ENCODE measurements at regions of chr3 and their contacts with region 1.

Region 1: GRCh38 chr3:129650256-129650872 is 43.9 kb upstream of the PLXND1 start:
- DNase-seq: peak; percentile 80
- H3K4me3 ChIP-seq: no peak overlapping the region
- H3K27ac ChIP-seq: no peak overlapping the region
- H3K4me1 ChIP-seq: peaks cover 24% of the 10 kb centered on the region
- H3K27me3 ChIP-seq: no peaks in the 10 kb centered on the region
- CTCF ChIP-seq: peak; percentile 58
- POLR2A ChIP-seq: no peak

Region 2: DNA sequence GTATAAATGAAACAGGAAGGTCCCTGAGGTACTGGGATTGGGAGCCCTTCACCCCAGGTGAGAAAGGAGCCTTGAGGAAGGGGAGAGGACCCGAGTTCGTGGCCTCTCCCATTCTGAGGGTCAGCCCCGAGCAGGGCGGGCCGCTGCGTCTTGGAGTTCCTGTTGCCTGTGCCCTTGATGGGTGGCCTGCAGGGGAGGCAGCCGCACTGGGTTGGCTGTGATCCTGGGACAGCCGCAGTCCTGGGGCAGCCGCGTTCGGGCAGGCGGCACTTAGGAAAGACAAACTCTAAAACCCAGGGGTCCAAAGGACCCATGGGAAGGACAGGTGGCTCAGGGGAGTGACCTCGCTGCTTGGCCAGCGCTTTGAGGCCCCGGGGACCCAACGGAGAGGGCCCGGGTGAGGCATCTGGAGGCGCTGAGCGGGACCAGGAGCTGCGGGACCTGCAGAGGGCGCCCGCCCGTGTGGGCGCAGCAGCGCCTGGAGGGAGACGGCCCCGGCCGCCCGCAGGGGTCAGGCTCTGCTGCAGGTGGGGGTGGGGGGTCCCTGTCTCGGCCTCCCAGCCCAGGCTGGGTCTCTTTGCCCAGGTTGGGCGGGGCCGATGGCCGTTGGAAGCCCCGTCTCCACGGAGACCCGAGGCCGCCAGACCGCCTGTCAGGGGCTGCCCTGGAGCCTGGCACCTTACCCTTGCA is 306.6 kb before region 1 on chr3:
- CTCF ChIA-PET with region 1: no interaction called
- POLR2A ChIA-PET with region 1: no interaction called
- dilution Hi-C with region 1: no loop called
- intact Hi-C with region 1: no loop called
- DNase-seq: no peak
- H3K4me3 ChIP-seq: no peak overlapping the region
- H3K27ac ChIP-seq: no peak overlapping the region
- H3K4me1 ChIP-seq: peaks cover 8% of the 10 kb centered on the region
- H3K27me3 ChIP-seq: no peaks in the 10 kb centered on the region
- CTCF ChIP-seq: peak; percentile 48 to 64
- POLR2A ChIP-seq: no peak

Region 3: DNA sequence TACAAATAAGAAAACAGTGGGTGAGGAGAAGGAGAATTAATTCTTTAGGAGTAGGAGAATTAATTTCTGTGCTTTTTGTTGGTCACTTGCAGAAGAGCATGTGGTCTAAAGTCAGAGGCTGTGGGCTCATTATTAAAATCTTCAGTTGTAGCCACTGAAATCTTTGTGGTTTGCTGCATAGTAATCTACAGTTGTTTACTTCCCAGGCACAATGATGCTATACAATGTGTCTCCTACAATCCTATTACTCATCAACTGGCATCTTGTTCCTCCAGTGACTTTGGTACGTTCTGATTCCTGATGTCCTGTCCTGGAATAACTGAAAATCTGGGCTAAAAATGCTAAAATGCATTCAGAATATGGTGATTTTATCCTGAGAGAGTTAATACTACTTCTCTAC is 189.3 kb before region 1 on chr3:
- CTCF ChIA-PET with region 1: no interaction called
- POLR2A ChIA-PET with region 1: no interaction called
- dilution Hi-C with region 1: no loop called
- intact Hi-C with region 1: no loop called
- DNase-seq: no peak
- H3K4me3 ChIP-seq: no peak overlapping the region
- H3K27ac ChIP-seq: no peak overlapping the region
- H3K4me1 ChIP-seq: no peaks in the 10 kb centered on the region
- H3K27me3 ChIP-seq: no peaks in the 10 kb centered on the region
- CTCF ChIP-seq: no peak
- POLR2A ChIP-seq: no peak

Region 4: GRCh38 chr3:129794311-129795185 is 144.2 kb after region 1 on chr3:
- CTCF ChIA-PET with region 1: interaction called, 3 read pairs
- POLR2A ChIA-PET with region 1: no interaction called
- dilution Hi-C with region 1: no loop called
- intact Hi-C with region 1: loop called (anchors 10 kb)
- DNase-seq: peak; percentile 67
- H3K4me3 ChIP-seq: peak overlapping the region; percentile 19 to 85 (median 62)
- H3K27ac ChIP-seq: peak overlapping the region; percentile 82
- H3K4me1 ChIP-seq: peaks cover 32% of the 10 kb centered on the region
- H3K27me3 ChIP-seq: no peaks in the 10 kb centered on the region
- CTCF ChIP-seq: no peak
- POLR2A ChIP-seq: no peak

Region 5: DNA sequence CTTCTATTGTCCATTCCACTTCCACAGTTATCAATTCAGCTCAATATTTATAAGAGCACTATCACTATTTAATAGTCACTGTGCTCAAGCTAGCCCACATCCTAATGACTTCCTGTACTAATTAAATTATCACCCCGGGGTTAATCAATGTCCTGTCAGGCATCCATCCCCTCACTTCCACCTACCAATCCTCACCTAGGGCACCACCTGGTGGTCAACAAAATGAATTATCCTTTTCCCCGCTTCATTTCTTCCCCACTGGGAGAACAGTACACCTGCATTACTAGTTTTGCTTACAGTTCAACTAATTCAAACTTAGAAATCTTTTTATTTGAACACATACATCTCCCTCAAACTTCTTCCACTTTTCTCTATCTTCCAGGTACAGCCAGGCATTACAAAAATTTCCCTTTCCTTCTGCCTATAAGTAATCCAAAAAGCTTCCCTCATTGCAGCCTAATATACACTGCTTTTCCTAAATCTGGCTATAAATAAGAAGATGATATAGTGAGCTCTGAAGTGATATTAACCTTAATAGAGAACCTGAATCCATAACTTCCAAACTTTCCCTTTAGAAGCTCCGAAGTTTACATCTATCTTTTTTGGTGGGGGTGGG is 174.7 kb after region 1 on chr3:
- CTCF ChIA-PET with region 1: interaction called, 31 read pairs
- POLR2A ChIA-PET with region 1: no interaction called
- dilution Hi-C with region 1: loop called (anchors 25 kb)
- intact Hi-C with region 1: loop called (anchors 1 kb)
- DNase-seq: peak; percentile 59
- H3K4me3 ChIP-seq: no peak overlapping the region
- H3K27ac ChIP-seq: no peak overlapping the region
- H3K4me1 ChIP-seq: peaks cover 6% of the 10 kb centered on the region
- H3K27me3 ChIP-seq: no peaks in the 10 kb centered on the region
- CTCF ChIP-seq: peak; percentile 51 to 54
- POLR2A ChIP-seq: no peak

Region 6: GRCh38 chr3:129893581-129894070 is 243.3 kb after region 1 on chr3 and contains the start of gene TMCC1:
- CTCF ChIA-PET with region 1: no interaction called
- POLR2A ChIA-PET with region 1: no interaction called
- dilution Hi-C with region 1: no loop called
- intact Hi-C with region 1: loop called (anchors 2 kb)
- DNase-seq: peak; percentile 78
- H3K4me3 ChIP-seq: peak within 1 kb of the TSS; percentile 54 to 91 (median 89)
- H3K27ac ChIP-seq: peak within 1 kb of the TSS; percentile 89
- H3K4me1 ChIP-seq: peaks cover 47% of the 10 kb centered on the region
- H3K27me3 ChIP-seq: no peaks in the 10 kb centered on the region
- CTCF ChIP-seq: no peak
- POLR2A ChIP-seq: peak; percentile 54
- total RNA-seq, gene TMCC1: 36.6 and 38.4 TPM in 2 replicates

Region 7: GRCh38 chr3:129934234-129935123 is 284.1 kb after region 1 on chr3:
- CTCF ChIA-PET with region 1: interaction called, 8 read pairs
- POLR2A ChIA-PET with region 1: no interaction called
- dilution Hi-C with region 1: no loop called
- intact Hi-C with region 1: loop called (anchors 1 kb)
- DNase-seq: peak; percentile 47
- H3K4me3 ChIP-seq: no peak overlapping the region
- H3K27ac ChIP-seq: no peak overlapping the region
- H3K4me1 ChIP-seq: peaks cover 3% of the 10 kb centered on the region
- H3K27me3 ChIP-seq: peaks cover 0 to 8% of the 10 kb centered on the region in 2 experiments
- CTCF ChIP-seq: peak; percentile 73 to 88
- POLR2A ChIP-seq: no peak